ENCODE measurements at regions of chr1 and their contacts with region 1.

Region 1: GRCh38 chr1:40691538-40692428 is at the start of gene NFYC:
- DNase-seq: peak; percentile 96

Region 2: GRCh38 chr1:40676501-40676900 is 15.3 kb before region 1 on chr1:
- CTCF ChIA-PET with region 1: no interaction called
- POLR2A ChIA-PET with region 1: interaction called, 56 read pairs
- DNase-seq: no peak

Region 3: DNA sequence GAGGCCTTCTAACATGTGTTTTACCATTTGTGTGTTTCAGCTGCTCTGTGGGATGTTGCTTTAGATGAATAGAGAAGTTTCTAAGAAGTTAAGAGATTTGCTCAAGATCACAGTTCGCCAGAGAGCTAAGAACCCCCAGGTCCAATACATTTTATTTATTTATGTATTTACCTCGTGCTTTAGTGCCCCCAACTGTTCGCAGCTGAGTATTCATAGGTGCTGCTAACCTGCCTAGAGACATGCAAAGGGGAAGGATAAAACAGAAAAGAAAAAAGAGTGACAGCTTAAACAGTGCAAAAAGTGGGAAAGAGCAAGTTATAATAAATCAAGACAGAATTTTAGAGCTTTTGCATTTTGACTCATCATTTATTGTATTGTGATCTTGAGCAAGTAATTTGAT is 30.9 kb after region 1 on chr1:
- CTCF ChIA-PET with region 1: interaction called, 3 read pairs
- POLR2A ChIA-PET with region 1: interaction called, 65 read pairs
- DNase-seq: no peak

Region 4: GRCh38 chr1:40758578-40759343 is 67.0 kb after region 1 on chr1:
- CTCF ChIA-PET with region 1: no interaction called
- POLR2A ChIA-PET with region 1: interaction called, 14 read pairs
- DNase-seq: no peak

Region 5: DNA sequence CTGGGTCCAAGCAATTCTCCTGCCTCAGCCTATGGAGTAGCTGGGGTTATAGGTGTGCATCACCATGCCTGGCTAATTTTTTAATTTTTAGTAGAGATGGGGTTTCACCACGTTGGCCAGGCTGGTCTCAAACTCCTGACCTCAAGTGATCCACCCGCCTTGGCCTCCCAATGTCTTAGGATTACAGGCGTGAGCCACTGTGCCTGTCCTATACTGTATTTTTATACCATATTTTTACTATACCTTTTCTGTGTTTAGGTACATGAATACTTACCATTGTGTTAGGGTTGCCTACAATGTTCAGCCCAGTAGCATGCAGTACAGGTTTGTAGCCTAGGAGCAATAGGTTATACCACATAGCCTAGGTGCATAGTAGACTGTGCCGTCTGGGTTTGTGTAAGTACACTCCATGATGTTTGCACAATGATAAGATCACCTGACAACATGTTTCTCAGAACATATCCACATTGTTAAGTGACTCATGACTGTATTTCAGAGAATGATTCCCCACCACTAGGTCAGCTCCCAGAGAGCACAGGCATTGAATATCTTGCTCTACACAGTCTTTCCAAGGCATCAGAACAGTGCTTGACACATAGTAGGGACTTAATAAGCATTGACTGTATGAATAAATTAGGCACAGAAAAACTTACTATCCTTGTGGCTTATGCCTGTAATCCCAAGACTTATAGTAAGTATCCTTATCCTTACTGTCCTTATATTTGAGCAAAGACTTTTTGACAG is 176.4 kb after region 1 on chr1:
- CTCF ChIA-PET with region 1: no interaction called
- POLR2A ChIA-PET with region 1: no interaction called
- DNase-seq: no peak